Pancreas (tissue), 10 donors: ENCODE measurements at regions of chr9 and their contacts with region 1.

Region 1: DNA sequence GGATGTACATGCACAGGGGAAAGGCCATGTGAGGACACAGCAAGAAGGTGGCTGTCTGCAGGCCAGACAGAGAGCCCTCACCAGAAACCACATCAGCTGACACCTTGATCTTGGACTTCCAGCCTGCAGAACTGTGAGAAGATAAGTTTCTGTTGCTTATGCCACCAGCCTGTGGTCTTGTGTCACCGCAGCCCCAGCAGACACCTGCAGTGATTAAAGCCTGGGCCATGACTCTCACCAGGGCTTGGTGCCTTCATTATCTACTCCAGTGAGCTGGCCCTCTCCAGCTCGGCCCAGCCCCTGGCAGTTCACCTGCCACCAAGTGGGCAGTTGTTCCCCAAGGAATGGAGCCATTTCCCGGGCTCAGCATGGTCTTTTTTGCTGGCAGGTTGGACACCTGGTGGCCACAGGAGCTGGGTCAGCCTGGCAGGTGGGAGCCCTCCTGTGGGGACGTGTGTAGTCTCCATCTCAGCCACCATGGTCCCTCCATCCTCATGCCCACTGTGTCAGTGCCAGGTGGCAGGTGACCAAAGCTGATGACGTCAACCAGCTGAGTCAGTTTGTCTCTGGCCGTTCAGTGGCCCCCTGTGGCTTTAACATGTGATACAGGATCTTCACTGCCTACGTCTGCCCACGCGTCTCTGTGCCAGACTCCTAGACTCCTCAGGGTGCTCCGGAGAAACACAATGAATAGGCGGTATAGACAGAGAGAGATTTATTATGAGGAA is 99.9 kb upstream of the PPP1R26 start:
- DNase-seq: peak in 1 of 6 donors; percentile 16
- ATAC-seq: no peak
- H3K4me3 ChIP-seq: no peak overlapping the region
- H3K27ac ChIP-seq: no peak overlapping the region
- H3K4me1 ChIP-seq: no peaks in the 10 kb centered on the region
- H3K27me3 ChIP-seq: no peaks in the 10 kb centered on the region
- CTCF ChIP-seq: no peak

Region 2: GRCh38 chr9:134768709-134769351 is 610.9 kb before region 1 on chr9:
- intact Hi-C with region 1: loop called in 1 of 3 experiments (anchors 10 kb)
- DNase-seq: no peak
- ATAC-seq: peak in 2 of 4 donors; percentile 28 to 45
- H3K4me3 ChIP-seq: no peak overlapping the region
- H3K27ac ChIP-seq: no peak overlapping the region
- H3K4me1 ChIP-seq: no peaks in the 10 kb centered on the region
- H3K27me3 ChIP-seq: no peaks in the 10 kb centered on the region
- CTCF ChIP-seq: no peak

Region 3: DNA sequence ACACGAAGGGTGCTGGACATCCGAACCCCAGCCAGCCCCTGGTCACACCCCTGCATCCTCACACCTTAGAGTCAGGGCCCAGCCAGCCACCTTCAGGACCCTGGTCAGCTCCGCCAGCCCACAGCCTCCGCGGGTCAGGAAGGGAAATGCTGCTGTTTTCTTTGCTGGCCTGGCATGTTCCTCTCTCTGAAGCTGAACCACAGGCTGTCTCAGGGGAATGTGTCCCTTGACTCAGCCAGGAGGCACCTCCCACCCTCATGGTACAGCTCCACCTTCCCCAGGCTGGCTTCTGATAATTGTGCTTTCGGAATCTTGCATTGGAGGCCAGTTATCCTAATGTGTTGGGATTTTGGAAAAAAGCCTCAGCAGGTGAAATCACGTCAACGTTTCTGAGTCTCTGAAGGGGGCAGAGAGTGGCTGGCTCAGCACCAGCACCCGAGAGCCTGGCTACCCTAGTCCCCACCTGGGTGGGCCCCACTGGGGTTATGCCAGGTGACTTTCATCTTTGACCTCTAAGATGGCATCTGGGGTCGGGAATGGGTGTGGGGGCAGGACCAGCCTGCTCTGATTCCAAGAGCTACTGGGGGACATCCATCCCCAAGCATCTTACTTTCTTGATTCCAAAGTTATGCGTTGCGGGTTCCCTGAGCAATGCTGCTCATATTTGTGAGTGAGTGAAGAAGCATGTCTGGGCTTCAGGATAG is 302.1 kb before region 1 on chr9:
- intact Hi-C with region 1: no loop called
- DNase-seq: peak in 2 of 6 donors; percentile 14 to 37
- ATAC-seq: peak in 1 of 4 donors; percentile 65
- H3K4me3 ChIP-seq: no peak overlapping the region
- H3K27ac ChIP-seq: no peak overlapping the region
- H3K4me1 ChIP-seq: no peaks in the 10 kb centered on the region
- H3K27me3 ChIP-seq: no peaks in the 10 kb centered on the region
- CTCF ChIP-seq: no peak